Activated T-helper 2 cell treated with anti-CD3 and anti-CD28 coated beads, Interferon-gamma antibody, Interleukin-2, Interleukin-4, amounts not matched to agents 10 μg/mL and 5 μg/mL and 100 μg/mL, durations not matched to agents 14 hours and 24 hours and 36 hours (primary cell): ENCODE measurements at regions of chr1 and their contacts with region 1.

Region 1: GRCh38 chr1:70509996-70510876 is 99.2 kb downstream of the CTH start:
- DNase-seq: no peak
- H3K4me3 Mint-ChIP-seq: no peak overlapping the region
- H3K27ac Mint-ChIP-seq: no peak overlapping the region
- H3K4me1 Mint-ChIP-seq: peaks cover 2% of the 10 kb centered on the region
- H3K27me3 Mint-ChIP-seq: peaks cover 7% of the 10 kb centered on the region

Region 2: GRCh38 chr1:70247768-70248167 is 262.5 kb before region 1 on chr1:
- intact Hi-C with region 1: loop called (anchors 5 kb)
- DNase-seq: no peak
- H3K4me3 Mint-ChIP-seq: no peak overlapping the region
- H3K27ac Mint-ChIP-seq: peak overlapping the region; percentile 43
- H3K4me1 Mint-ChIP-seq: peaks cover 38% of the 10 kb centered on the region
- H3K27me3 Mint-ChIP-seq: no peaks in the 10 kb centered on the region

Region 3: DNA sequence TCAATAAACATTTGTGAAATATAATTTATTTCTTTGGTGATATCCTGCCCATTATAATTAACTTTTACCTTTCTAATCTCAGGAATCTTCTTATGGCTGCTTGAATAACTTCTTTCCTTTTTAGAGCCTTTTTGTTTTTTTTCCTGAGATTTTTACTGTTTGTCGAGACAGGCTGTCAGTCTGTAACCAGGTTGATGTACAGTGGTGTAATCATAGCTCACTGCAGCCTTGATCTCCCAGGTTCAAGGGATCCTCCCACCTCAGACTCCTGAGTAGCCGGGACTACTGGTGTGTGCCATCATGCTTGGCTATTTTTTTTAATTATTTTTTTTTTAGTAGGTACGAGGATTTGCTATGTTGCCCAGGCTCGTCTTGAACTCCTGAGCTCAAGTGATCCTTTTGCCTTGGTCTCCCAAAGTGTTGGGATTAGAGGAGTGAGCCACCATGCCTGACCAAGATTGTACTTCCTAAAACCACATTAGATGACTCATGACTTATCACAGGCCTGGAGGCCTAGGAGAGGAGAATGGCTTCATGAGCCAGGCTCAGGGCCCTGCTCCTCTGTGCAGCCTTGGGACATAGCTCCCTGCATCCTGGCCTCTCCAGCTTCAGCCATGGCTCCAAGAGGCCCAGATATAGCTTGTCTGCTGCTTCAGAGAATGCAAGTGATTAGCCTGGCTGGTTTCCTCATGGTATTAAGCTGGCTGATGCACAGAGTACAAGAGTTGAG is 50.6 kb before region 1 on chr1:
- intact Hi-C with region 1: no loop called
- DNase-seq: no peak
- H3K4me3 Mint-ChIP-seq: no peak overlapping the region
- H3K27ac Mint-ChIP-seq: no peak overlapping the region
- H3K4me1 Mint-ChIP-seq: no peaks in the 10 kb centered on the region
- H3K27me3 Mint-ChIP-seq: no peaks in the 10 kb centered on the region